ENCODE measurements at regions of chr7 and their contacts with region 1.

Region 1: GRCh38 chr7:732094-732541 is 5.0 kb upstream of the PRKAR1B start:
- DNase-seq: peak; percentile 83 to 87
- H3K4me3 ChIP-seq: no peak overlapping the region
- H3K27ac ChIP-seq: peak overlapping the region; percentile 35; the same call in 1 of the 2 replicates
- H3K4me1 ChIP-seq: peaks cover 23% of the 10 kb centered on the region
- H3K27me3 ChIP-seq: no peaks in the 10 kb centered on the region
- CTCF ChIP-seq: peak; percentile 48; the same call in 1 of the 2 replicates

Region 2: GRCh38 chr7:518630-519483 is 213.3 kb before region 1 on chr7:
- CTCF ChIA-PET with region 1: interaction called, 3 read pairs
- POLR2A ChIA-PET with region 1: interaction called, 16 read pairs
- intact Hi-C with region 1: loop called (anchors 2 kb)
- DNase-seq: peak; percentile 62 to 93
- H3K4me3 ChIP-seq: peak overlapping the region; percentile 95
- H3K27ac ChIP-seq: peak overlapping the region; percentile 17; the same call in 1 of the 2 replicates
- H3K4me1 ChIP-seq: peaks cover 10% of the 10 kb centered on the region; the same call in 1 of the 2 replicates
- H3K27me3 ChIP-seq: no peaks in the 10 kb centered on the region
- CTCF ChIP-seq: no peak

Region 3: GRCh38 chr7:625376-625971 is 106.6 kb before region 1 on chr7:
- CTCF ChIA-PET with region 1: no interaction called
- POLR2A ChIA-PET with region 1: no interaction called
- intact Hi-C with region 1: no loop called
- DNase-seq: no peak
- H3K4me3 ChIP-seq: no peak overlapping the region
- H3K27ac ChIP-seq: no peak overlapping the region
- H3K4me1 ChIP-seq: peaks cover 23% of the 10 kb centered on the region
- H3K27me3 ChIP-seq: no peaks in the 10 kb centered on the region
- CTCF ChIP-seq: no peak

Region 4: GRCh38 chr7:774161-775109 is 42.3 kb after region 1 on chr7:
- CTCF ChIA-PET with region 1: no interaction called
- POLR2A ChIA-PET with region 1: no interaction called
- intact Hi-C with region 1: no loop called
- DNase-seq: peak in 1 of 2 experiments; percentile 37
- H3K4me3 ChIP-seq: no peak overlapping the region
- H3K27ac ChIP-seq: no peak overlapping the region
- H3K4me1 ChIP-seq: no peaks in the 10 kb centered on the region
- H3K27me3 ChIP-seq: no peaks in the 10 kb centered on the region
- CTCF ChIP-seq: peak; percentile 86

Region 5: GRCh38 chr7:1059200-1060091 is 327.3 kb after region 1 on chr7:
- CTCF ChIA-PET with region 1: no interaction called
- POLR2A ChIA-PET with region 1: no interaction called
- intact Hi-C with region 1: no loop called
- DNase-seq: no peak
- H3K4me3 ChIP-seq: no peak overlapping the region
- H3K27ac ChIP-seq: no peak overlapping the region
- H3K4me1 ChIP-seq: no peaks in the 10 kb centered on the region
- H3K27me3 ChIP-seq: no peaks in the 10 kb centered on the region
- CTCF ChIP-seq: no peak

Region 6: GRCh38 chr7:1159891-1160668 is 428.0 kb after region 1 on chr7 and contains the start of gene ZFAND2A:
- CTCF ChIA-PET with region 1: no interaction called
- POLR2A ChIA-PET with region 1: no interaction called
- intact Hi-C with region 1: no loop called
- DNase-seq: peak; percentile 94 to 100
- H3K4me3 ChIP-seq: peak within 1 kb of the TSS; percentile 96
- H3K27ac ChIP-seq: peak within 1 kb of the TSS; percentile 77
- H3K4me1 ChIP-seq: peaks cover 45% of the 10 kb centered on the region
- H3K27me3 ChIP-seq: no peaks in the 10 kb centered on the region
- CTCF ChIP-seq: no peak
- total RNA-seq, gene ZFAND2A: 51.2 and 65.1 TPM in 2 replicates

Measured in PC-9 (cell line).